Head of caudate nucleus (tissue), 42 donors: ENCODE measurements at regions of chrX and their contacts with region 1.

Region 1: DNA sequence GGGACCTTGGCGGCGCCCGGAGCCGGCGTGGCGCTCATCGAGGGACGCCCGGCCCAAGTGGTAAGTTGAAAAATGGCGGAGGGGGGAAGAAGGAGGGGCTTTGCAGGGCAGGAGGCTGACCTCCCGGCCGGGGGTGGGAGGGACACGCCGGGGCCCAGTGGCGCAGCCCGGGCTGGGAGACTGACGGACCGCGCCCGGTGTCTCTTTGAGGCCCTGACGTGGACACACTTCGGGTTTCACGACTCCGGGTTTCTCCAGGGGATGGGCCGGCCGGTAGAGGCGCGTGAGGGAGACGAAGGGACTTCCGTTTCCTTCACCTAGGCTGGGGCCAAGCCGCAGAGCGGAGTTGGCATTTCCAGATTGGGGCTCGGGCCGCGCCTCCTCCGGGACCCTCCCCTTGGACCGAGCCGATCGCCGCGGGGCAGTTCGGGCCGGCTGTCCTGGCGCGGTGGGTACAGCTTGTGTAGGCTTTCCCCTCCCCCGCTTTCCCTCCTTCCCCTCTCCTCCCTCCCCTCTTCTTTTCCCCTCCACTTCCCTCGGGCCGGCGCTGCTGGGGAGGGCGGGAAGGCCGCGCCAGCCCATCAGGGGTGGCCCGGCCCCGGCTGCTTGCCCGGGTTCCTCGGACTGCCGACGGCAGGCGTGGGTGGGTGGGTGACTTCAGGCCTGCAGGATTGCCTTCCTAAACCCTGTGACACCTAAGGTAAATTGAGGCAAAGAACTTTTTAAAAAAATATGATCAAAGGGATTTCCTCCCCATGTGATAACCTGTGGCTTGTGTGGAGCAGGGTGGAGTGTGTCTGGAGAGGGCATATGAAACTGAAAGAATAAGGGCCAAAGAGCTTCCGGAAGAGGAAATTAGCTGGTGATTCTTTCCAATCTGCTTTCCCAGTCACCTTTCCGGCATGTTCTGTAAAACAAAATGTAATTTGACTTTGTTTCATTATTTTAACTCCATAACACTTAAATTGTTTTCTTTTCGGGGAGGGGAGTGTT is at the start of gene XIAP:
- DNase-seq: peak; percentile 22 to 87 (median 72)

Region 2: GRCh38 chrX:123899701-123900100 is 39.6 kb after region 1 on chrX:
- intact Hi-C with region 1: no loop called
- DNase-seq: no peak

Region 3: DNA sequence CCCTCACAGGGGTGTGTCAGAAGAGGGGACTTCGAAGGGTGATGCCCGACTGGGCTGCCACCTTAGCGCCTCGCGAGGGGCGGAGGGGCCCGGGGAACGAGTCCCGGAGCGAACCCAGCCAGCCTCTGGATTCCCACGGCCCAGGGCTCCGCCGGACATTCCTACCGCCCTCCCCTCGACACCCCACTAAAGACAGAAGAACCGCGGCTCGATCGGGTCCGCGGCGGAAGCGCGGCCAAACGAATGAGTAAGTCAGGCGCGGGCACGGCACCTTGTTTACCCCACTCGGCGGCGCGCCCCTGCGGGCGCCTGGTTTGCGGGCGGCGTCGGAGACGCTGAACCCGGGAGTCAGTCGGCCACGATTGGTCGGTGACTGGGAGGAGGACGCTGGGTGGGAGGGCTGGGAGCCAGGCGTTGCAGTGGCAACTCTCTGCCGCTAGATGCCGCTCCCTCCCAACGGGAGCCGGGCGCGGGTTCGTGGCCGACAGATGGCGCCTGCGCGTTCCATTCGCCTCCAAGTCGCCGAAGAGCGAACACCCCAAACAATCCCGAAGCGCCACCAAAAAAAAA is 100.0 kb after region 1 on chrX:
- intact Hi-C with region 1: loop called (anchors 10 kb)
- DNase-seq: peak; percentile 72 to 94 (median 88)